CD8-positive, alpha-beta T cell (primary cell): ENCODE measurements at regions of chr15 and their contacts with region 1.

Region 1: DNA sequence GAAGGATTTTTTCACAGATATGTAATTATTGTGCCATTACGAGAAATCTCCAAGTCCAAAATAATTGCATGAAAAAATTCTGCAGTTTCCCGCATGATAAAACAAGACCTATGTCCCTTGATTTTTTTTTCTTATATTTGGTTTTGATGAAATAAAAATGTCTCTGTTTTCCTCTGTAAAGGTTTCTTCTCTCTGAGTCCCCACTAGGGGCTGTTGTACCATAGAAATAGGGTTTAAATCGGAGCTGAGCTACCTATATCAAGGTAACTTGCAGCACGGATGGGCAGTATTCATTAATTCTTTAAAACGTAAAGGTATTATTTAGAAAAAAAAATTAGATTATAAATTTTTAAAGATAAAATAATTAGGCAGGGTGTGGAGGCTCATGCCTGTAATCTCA is 66.6 kb upstream of the IGF1R start:
- DNase-seq: peak in 2 of 9 experiments; percentile 8 to 44
- ATAC-seq: peak; percentile 56
- H3K4me3 ChIP-seq: no peak overlapping the region
- H3K4me3 Mint-ChIP-seq: no peak overlapping the region
- H3K27ac ChIP-seq: no peak overlapping the region
- H3K27ac Mint-ChIP-seq: no peak overlapping the region
- H3K4me1 ChIP-seq: peaks cover 10% of the 10 kb centered on the region
- H3K4me1 Mint-ChIP-seq: peaks cover 5% of the 10 kb centered on the region
- H3K27me3 ChIP-seq: peaks cover 7 to 13% of the 10 kb centered on the region in 2 experiments
- H3K27me3 Mint-ChIP-seq: peaks cover 32% of the 10 kb centered on the region
- CTCF ChIP-seq: peak; percentile 43

Region 2: GRCh38 chr15:98231696-98232440 is 349.8 kb before region 1 on chr15:
- CTCF ChIA-PET with region 1: no interaction called
- POLR2A ChIA-PET with region 1: no interaction called
- intact Hi-C with region 1: no loop called
- DNase-seq: no peak
- ATAC-seq: no peak
- H3K4me3 ChIP-seq: no peak overlapping the region
- H3K4me3 Mint-ChIP-seq: no peak overlapping the region
- H3K27ac ChIP-seq: no peak overlapping the region
- H3K27ac Mint-ChIP-seq: no peak overlapping the region
- H3K4me1 ChIP-seq: no peaks in the 10 kb centered on the region
- H3K4me1 Mint-ChIP-seq: no peaks in the 10 kb centered on the region
- H3K27me3 ChIP-seq: peaks cover 0 to 2% of the 10 kb centered on the region in 2 experiments
- H3K27me3 Mint-ChIP-seq: peaks cover 4% of the 10 kb centered on the region
- CTCF ChIP-seq: no peak

Region 3: GRCh38 chr15:98620020-98620419 is 38.3 kb after region 1 on chr15:
- CTCF ChIA-PET with region 1: no interaction called
- POLR2A ChIA-PET with region 1: no interaction called
- intact Hi-C with region 1: loop called in 1 of 2 experiments (anchors 5 kb)
- DNase-seq: no peak
- ATAC-seq: no peak
- H3K4me3 ChIP-seq: no peak overlapping the region
- H3K4me3 Mint-ChIP-seq: no peak overlapping the region
- H3K27ac ChIP-seq: no peak overlapping the region
- H3K27ac Mint-ChIP-seq: no peak overlapping the region
- H3K4me1 ChIP-seq: no peaks in the 10 kb centered on the region
- H3K4me1 Mint-ChIP-seq: no peaks in the 10 kb centered on the region
- H3K27me3 ChIP-seq: no peaks in the 10 kb centered on the region
- H3K27me3 Mint-ChIP-seq: peaks cover 20% of the 10 kb centered on the region
- CTCF ChIP-seq: no peak